Activated CD4-positive, alpha-beta T cell treated with anti-CD3 and anti-CD28 coated beads, Interleukin-2, amount 10 ng/mL, durations not matched to agents 24 days and 14 days (primary cell): ENCODE measurements at regions of chr6 and their contacts with region 1.

Region 1: GRCh38 chr6:28425944-28426541 is 17.2 kb downstream of the ZSCAN23 start:
- DNase-seq: peak; percentile 73
- H3K4me3 Mint-ChIP-seq: peak overlapping the region; percentile 41
- H3K27ac Mint-ChIP-seq: peak overlapping the region; percentile 10
- H3K4me1 Mint-ChIP-seq: peaks cover 24% of the 10 kb centered on the region
- H3K27me3 Mint-ChIP-seq: peaks cover 31% of the 10 kb centered on the region

Region 2: DNA sequence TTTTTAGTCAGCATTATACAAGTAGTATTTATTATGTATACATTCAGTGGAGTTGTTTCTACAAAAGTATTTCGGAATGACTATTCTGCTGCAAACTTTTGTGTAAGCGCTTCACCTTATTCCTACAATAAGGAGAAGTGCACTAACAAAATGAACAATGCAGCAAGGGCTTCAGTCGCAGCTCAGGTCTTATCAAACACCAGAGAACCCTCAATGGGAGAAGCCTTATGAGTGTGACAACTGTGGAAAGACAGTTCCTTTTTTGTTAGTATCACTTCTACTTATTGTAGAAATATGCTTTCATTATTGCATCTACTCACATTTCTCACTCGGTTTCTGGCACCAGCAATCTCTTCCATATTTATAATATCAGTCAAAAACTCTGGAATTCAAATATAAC is 57.5 kb before region 1 on chr6:
- intact Hi-C with region 1: no loop called
- DNase-seq: no peak
- H3K4me3 Mint-ChIP-seq: no peak overlapping the region
- H3K27ac Mint-ChIP-seq: no peak overlapping the region
- H3K4me1 Mint-ChIP-seq: no peaks in the 10 kb centered on the region
- H3K27me3 Mint-ChIP-seq: no peaks in the 10 kb centered on the region

Region 3: DNA sequence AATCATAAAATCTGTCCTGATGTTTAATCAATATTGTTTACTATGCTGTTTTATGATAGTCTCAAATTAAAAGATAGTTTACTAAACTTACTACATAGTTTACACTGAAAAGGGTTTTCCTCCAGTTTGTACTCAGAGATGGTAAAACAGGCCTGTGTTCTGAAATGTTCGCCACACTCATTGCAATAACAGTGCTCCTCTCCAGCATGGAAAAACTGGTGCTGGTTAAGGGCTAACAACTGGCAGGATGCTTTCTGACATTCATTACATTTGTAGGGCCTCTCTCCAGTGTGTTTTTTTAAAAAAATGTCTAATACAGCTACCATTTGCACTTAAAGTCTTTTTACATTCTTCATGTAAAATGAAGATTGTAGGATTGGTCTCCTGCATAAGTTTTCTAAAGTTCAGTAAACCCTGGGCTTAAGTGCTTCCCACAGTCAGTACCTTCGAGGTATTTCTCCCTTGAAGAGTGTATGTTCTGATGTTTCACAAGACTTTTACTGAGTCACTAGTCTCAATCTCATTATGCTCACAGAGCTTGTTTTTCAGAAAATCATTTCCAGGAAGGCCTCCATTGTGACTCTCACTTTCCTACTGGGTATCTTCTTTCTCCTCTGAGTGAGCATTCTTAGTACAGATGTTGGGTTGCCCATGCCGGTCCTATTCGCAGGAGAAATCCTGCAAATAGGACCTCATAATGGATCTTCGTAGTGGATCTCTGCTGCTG is 17.8 kb before region 1 on chr6:
- intact Hi-C with region 1: loop called (anchors 2 kb)
- DNase-seq: peak; percentile 65
- H3K4me3 Mint-ChIP-seq: no peak overlapping the region
- H3K27ac Mint-ChIP-seq: peak overlapping the region; percentile 77
- H3K4me1 Mint-ChIP-seq: peaks cover 28% of the 10 kb centered on the region
- H3K27me3 Mint-ChIP-seq: peaks cover 28% of the 10 kb centered on the region